PC-3 (cell line): ENCODE measurements at regions of chr15 and their contacts with region 1.

Region 1: DNA sequence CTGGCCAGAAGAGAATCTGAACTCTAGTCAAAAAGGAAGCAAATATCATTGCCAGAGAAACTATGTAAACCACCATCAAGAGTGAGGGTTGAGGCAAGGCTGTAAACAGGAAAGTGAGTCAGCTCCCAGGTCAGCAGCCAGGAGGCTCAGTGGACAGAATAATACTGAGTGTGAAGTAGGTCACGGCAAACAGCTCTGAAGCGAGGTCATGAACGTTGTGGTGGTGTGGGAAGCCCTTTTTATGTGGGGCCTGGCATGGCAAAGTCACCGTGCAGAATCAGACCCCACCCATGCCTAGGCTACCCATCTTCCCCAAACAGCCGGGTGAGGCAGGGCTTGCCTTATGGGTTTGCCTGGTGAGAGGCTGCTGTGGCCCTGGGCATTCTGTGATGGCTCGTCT is 43.9 kb downstream of the THBS1 start:
- DNase-seq: peak; percentile 88
- ATAC-seq: peak; percentile 84
- H3K4me3 ChIP-seq: no peak overlapping the region
- H3K27ac ChIP-seq: peak overlapping the region; percentile 60
- H3K4me1 ChIP-seq: peaks cover 54% of the 10 kb centered on the region
- H3K27me3 ChIP-seq: no peaks in the 10 kb centered on the region
- CTCF ChIP-seq: no peak

Region 2: DNA sequence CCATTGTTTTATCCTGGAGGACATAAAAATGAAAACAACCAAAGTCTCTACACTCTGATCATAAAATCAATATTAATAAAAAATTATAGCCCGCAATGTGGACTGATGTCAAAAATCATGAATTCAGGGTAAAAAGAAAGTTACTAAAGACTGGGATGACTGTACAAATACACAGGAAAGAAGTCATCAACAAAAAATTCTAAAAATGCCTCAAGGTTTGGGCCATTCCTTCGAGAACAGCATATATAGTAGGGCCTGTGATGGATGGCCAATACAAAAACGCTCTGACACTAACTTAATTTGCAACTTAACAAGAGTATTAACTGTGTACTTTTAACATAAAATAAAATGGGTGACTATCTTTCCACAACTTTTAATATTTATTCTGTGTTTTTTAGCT is 32.9 kb after region 1 on chr15:
- CTCF ChIA-PET with region 1: no interaction called
- POLR2A ChIA-PET with region 1: no interaction called
- intact Hi-C with region 1: loop called (anchors 1 kb)
- DNase-seq: peak; percentile 81
- ATAC-seq: peak; percentile 95
- H3K4me3 ChIP-seq: no peak overlapping the region
- H3K27ac ChIP-seq: no peak overlapping the region
- H3K4me1 ChIP-seq: peaks cover 20% of the 10 kb centered on the region
- H3K27me3 ChIP-seq: no peaks in the 10 kb centered on the region
- CTCF ChIP-seq: no peak

Region 3: GRCh38 chr15:40016224-40016865 is 391.5 kb after region 1 on chr15:
- CTCF ChIA-PET with region 1: no interaction called
- POLR2A ChIA-PET with region 1: no interaction called
- intact Hi-C with region 1: no loop called
- DNase-seq: no peak
- ATAC-seq: peak; percentile 58
- H3K4me3 ChIP-seq: no peak overlapping the region
- H3K27ac ChIP-seq: no peak overlapping the region
- H3K4me1 ChIP-seq: no peaks in the 10 kb centered on the region
- H3K27me3 ChIP-seq: no peaks in the 10 kb centered on the region
- CTCF ChIP-seq: no peak